ENCODE measurements at regions of chr7 and their contacts with region 1.

Region 1: GRCh38 chr7:24825931-24826661 is 68.8 kb upstream of the GSDME start:
- DNase-seq: no peak
- H3K4me3 ChIP-seq: no peak overlapping the region
- CTCF ChIP-seq: no peak

Region 2: DNA sequence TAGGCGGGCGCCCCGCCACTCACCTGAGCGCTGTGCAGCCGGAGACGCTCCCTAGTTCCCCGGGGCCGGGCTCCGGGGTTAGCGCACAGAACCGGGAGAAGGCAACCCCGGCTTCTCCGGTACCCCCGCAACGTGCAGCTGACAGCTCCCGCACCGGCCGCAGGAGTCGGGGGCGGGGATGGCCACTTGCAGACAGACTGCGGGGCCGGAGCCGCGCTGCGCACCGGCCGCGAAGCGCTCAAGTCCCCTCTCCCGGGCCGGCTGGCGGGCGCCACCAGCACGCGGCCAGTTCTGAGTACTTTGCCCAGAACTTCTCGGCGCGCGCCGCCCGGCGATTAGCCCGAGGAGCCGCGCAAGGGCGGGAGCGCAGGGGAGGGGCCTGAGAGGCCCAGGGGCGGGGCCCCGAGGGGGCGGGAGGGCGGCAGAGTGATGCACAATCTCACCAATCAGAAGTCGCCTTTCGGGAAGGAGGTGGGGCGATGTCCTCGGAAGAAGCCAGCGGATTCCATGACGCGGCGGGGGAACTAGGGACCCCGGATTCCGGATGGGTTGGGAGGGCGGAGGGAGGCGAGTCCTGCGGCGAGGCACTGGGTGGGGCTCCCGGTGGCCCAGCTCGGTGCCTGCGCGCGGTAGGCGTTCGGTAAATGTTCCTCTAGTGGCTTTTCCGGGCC is 153.9 kb after region 1 on chr7 and contains the start of gene OSBPL3:
- CTCF ChIA-PET with region 1: interaction called, 34 read pairs
- POLR2A ChIA-PET with region 1: interaction called, 6 read pairs
- DNase-seq: peak; percentile 66
- H3K4me3 ChIP-seq: peak within 1 kb of the TSS; percentile 76
- CTCF ChIP-seq: no peak

Region 3: GRCh38 chr7:25485026-25485425 is 658.9 kb after region 1 on chr7:
- CTCF ChIA-PET with region 1: no interaction called
- POLR2A ChIA-PET with region 1: no interaction called
- DNase-seq: no peak
- H3K4me3 ChIP-seq: no peak overlapping the region
- CTCF ChIP-seq: no peak

Measured in AG04449 (cell line).